ENCODE measurements at regions of chr2 and their contacts with region 1.

Region 1: GRCh38 chr2:222709191-222709891 is 37.9 kb downstream of the MOGAT1 start:
- DNase-seq: peak; percentile 74

Region 2: DNA sequence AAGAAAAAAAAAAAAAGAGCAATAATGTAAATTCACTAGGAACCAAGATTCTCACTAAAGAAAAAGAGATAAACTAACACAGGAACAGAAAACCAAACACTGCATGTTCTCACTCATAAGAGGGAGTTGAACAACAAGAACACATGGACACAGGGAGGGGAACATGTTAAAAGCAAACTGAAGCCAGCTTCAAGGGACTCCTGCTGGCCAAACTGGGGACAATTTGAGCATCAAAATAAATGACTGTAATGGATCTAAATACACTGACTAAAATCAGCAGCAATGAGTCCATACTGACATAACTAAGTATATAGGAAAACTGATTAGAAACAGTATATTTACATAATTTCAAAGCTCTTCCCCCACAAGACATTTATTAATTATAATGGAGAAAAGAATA is 126.4 kb before region 1 on chr2:
- CTCF ChIA-PET with region 1: no interaction called
- POLR2A ChIA-PET with region 1: no interaction called
- DNase-seq: no peak

Region 3: GRCh38 chr2:222860740-222861410 is 151.5 kb after region 1 on chr2 and contains the start of gene ACSL3:
- CTCF ChIA-PET with region 1: interaction called, 8 read pairs
- POLR2A ChIA-PET with region 1: interaction called, 13 read pairs
- DNase-seq: peak; percentile 89

Region 4: DNA sequence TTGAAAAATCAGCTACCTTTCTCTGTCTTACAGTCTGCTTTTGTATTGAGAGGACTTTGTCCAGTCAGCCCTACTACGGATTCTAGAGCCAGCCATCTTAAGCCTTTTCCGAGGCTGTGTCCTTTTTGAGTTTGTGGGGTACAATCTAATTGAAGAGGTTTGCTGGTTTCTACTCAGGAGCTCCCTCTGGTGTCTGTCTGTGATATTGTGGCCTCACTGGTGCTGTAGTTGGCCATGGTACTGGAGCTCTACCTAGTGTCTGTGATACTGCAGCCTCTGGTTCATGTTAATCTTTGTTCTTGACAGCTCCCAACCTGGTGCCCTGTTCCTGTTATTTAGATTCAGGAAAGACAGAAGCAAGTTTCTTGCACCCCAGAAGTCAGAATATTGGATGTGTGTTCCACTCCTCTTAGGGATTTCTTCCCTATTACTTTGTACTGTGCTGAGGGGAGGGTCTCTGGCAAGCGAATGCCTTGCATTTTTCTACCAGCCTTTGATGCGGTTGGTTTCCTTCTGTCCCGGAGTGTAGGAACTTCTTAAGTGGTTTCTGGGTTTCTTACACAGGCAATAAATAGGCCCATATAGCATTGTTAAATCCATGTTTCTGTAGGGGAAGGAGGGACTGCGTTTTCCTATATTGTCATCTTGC is 230.0 kb after region 1 on chr2:
- CTCF ChIA-PET with region 1: interaction called, 10 read pairs
- POLR2A ChIA-PET with region 1: no interaction called
- DNase-seq: peak; percentile 58

Measured in HEK293T (cell line).